CD4-positive, alpha-beta memory T cell (primary cell): ENCODE measurements at regions of chr20 and their contacts with region 1.

Region 1: DNA sequence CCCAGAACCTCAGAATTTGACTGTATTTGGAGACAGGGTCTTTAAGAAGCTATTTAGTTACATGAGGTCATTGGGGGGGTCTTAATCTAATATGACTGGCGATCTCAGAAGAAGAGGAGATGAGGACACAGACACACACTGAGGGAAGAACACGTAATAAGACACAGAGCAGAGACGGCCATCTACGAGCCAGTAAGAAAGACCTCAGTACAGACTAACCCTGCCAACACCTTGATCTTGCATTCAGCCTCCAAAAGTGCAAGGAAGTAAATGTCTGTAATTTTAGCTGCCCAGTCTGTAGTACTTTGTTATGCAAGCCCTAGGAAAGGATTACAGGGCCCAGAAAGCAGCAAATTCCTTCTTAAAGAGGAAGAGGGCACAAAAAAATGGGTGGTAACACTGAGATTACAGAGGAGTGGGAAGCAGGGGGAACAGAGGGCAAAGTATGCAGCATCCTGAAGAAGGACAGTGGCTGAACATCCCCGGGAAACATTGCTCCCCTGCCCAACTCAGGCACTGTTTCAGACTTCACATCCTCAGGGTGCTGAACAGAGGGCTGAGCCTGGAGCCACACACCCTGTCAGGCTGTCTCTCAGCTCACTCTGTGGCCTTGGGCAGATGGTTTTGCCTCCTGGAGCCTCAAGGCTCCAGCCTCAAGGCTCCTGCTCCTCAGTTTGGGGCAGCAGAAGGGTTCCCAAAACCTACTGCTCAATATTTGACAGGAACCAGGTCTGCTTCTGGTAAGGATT is 27.9 kb upstream of the SIRPG start:
- DNase-seq: peak in 1 of 5 donors; percentile 41
- H3K4me3 ChIP-seq: peak overlapping the region; percentile 34 to 52
- H3K4me3 Mint-ChIP-seq: peak overlapping the region; percentile 66 to 88 (median 77)
- H3K27ac ChIP-seq: peak overlapping the region; percentile 26
- H3K27ac Mint-ChIP-seq: peak overlapping the region; percentile 68 to 88 (median 82)
- H3K4me1 ChIP-seq: peaks cover 35% of the 10 kb centered on the region
- H3K4me1 Mint-ChIP-seq: peaks cover 18 to 47% (median 39%) of the 10 kb centered on the region in 4 donors
- H3K27me3 ChIP-seq: no peaks in the 10 kb centered on the region
- H3K27me3 Mint-ChIP-seq: no peaks in the 10 kb centered on the region

Region 2: GRCh38 chr20:1712990-1713624 is 27.6 kb after region 1 on chr20:
- CTCF ChIA-PET with region 1: no interaction called
- POLR2A ChIA-PET with region 1: no interaction called
- intact Hi-C with region 1: loop called (anchors 1 kb)
- DNase-seq: no peak
- H3K4me3 ChIP-seq: no peak overlapping the region
- H3K4me3 Mint-ChIP-seq: no peak overlapping the region
- H3K27ac ChIP-seq: no peak overlapping the region
- H3K27ac Mint-ChIP-seq: peak overlapping the region in 1 of 7 donors; percentile 13
- H3K4me1 ChIP-seq: peaks cover 5% of the 10 kb centered on the region
- H3K4me1 Mint-ChIP-seq: peaks cover 0 to 8% (median 3%) of the 10 kb centered on the region in 4 donors
- H3K27me3 ChIP-seq: no peaks in the 10 kb centered on the region
- H3K27me3 Mint-ChIP-seq: no peaks in the 10 kb centered on the region